Posterior vena cava (tissue), 2 donors: ENCODE measurements at regions of chr2 and their contacts with region 1.

Region 1: DNA sequence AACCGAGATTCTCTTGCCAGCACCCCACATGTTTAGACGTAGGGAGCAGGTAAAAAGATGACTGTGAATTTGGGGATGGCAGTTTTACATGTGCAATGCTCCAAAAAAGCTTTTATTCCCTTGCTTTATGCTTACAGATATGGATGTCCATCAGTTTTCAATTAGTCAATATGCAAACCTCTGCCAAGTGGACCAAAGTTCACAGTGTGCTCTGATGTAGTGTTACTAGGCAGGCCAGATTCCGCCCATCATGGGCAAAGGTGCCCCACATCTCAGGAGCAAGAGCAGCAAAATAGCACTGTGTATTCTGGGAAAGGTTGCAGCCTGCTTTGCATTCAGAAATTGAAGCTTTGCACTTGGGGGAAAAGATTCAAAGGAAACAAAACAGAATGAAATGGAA is 329.7 kb upstream of the ZEB2 start:
- DNase-seq: no peak

Region 2: GRCh38 chr2:144099746-144100438 is 749.7 kb before region 1 on chr2:
- intact Hi-C with region 1: loop called in 1 of 2 experiments (anchors 10 kb)
- DNase-seq: no peak